Left cardiac atrium (tissue), 4 donors: ENCODE measurements at regions of chr11 and their contacts with region 1.

Region 1: DNA sequence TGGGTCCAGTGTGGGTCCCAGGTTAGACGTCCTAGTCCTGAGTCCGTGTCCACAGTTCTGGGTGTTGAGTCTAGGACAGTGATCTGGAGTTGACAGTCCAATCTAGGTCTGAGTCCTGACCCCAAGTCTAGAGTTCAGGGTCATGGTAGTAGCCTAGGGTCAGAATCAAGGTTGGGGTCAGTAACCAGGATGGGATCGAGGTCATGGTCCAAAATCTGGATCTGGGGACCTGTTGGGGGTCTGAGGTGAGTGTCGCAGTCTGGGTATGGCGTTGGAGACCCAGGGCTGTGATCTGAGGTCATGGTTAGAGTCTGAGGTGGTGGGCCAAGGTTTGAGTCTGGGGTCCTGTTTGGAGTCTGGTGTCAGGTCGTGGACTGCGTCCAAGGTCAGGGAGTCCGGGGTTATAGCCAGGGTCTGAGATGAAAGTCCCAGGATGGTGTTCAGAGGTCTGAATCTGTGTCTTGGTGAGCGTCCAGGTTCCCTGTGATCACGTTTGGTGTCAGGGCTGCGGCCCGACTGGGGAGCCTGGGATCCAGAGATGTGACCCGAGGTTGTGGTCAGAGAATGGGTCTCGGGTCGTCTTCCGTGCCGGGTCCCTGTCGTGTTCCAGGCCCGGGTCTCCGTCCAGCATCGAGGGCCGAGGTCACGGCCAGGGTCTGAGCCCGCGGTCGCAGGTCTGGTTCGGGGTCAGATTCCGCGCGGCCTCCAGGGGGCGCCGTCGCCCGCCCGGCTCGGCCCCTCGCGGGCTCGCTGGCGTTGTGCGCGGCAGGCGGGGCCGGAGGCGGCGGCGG is 445 bp upstream of the GRK2 start:
- DNase-seq: peak; percentile 82
- ATAC-seq: peak; percentile 44 to 67

Region 2: GRCh38 chr11:67317205-67317887 is 51.5 kb after region 1 on chr11:
- intact Hi-C with region 1: loop called (anchors 1 to 2 kb)
- DNase-seq: peak; percentile 97
- ATAC-seq: peak; percentile 93 to 94

Region 3: DNA sequence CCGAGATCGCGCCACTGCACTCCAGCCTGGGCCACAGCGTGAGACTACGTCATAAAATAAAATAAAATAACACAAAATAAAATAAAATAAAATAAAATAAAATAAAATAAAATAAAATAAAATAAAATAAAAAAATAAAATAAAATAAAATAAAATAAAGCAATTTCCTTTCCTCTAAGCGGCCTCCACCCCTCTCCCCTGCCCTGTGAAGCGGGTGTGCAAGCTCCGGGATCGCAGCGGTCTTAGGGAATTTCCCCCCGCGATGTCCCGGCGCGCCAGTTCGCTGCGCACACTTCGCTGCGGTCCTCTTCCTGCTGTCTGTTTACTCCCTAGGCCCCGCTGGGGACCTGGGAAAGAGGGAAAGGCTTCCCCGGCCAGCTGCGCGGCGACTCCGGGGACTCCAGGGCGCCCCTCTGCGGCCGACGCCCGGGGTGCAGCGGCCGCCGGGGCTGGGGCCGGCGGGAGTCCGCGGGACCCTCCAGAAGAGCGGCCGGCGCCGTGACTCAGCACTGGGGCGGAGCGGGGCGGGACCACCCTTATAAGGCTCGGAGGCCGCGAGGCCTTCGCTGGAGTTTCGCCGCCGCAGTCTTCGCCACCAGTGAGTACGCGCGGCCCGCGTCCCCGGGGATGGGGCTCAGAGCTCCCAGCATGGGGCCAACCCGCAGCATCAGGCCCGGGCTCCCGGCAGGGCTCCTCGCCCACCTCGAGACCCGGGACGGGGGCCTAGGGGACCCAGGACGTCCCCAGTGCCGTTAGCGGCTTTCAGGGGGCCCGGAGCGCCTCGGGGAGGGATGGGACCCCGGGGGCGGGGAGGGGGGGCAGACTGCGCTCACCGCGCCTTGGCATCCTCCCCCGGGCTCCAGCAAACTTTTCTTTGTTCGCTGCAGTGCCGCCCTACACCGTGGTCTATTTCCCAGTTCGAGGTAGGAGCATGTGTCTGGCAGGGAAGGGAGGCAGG is 317.7 kb after region 1 on chr11 and contains the start of gene GSTP1:
- intact Hi-C with region 1: no loop called
- DNase-seq: peak; percentile 95
- ATAC-seq: peak; percentile 98
- total RNA-seq, gene GSTP1: 314 to 337 TPM